AG04449 (cell line): ENCODE measurements at regions of chr14 and their contacts with region 1.

Region 1: GRCh38 chr14:23379366-23380196 is 2.7 kb downstream of the CMTM5 start:
- DNase-seq: no peak
- H3K4me3 ChIP-seq: no peak overlapping the region
- CTCF ChIP-seq: peak; percentile 98

Region 2: DNA sequence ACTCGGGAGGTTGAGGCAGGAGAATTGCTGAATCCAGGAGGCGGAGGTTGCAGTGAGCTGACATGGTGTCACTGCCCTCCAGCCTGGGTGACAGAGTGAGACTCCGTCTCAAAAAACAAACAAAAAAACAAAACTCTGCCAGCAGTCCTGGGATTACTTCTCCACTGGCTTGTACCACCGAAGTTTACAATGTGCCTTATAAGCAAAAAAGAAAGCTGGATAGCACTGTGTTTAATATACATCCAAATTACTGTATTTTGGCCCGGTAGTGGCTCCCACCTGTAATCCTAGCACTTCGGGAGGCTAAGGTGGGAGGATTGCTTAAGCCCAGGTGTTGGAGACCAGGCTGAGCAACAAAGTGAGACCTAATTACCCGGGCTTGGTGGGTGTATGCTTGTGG is 110.4 kb before region 1 on chr14:
- CTCF ChIA-PET with region 1: interaction called, 16 read pairs
- POLR2A ChIA-PET with region 1: no interaction called
- DNase-seq: no peak
- H3K4me3 ChIP-seq: no peak overlapping the region
- CTCF ChIP-seq: no peak

Region 3: GRCh38 chr14:23335623-23336022 is 44.0 kb before region 1 on chr14:
- CTCF ChIA-PET with region 1: interaction called, 303 read pairs
- POLR2A ChIA-PET with region 1: no interaction called
- DNase-seq: no peak
- H3K4me3 ChIP-seq: no peak overlapping the region
- CTCF ChIP-seq: no peak

Region 4: GRCh38 chr14:23352511-23353432 is 26.8 kb before region 1 on chr14 and contains the start of gene SLC22A17:
- CTCF ChIA-PET with region 1: interaction called, 33 read pairs
- POLR2A ChIA-PET with region 1: no interaction called
- DNase-seq: peak; percentile 59
- H3K4me3 ChIP-seq: peak within 1 kb of the TSS; percentile 87
- CTCF ChIP-seq: peak; percentile 10

Region 5: DNA sequence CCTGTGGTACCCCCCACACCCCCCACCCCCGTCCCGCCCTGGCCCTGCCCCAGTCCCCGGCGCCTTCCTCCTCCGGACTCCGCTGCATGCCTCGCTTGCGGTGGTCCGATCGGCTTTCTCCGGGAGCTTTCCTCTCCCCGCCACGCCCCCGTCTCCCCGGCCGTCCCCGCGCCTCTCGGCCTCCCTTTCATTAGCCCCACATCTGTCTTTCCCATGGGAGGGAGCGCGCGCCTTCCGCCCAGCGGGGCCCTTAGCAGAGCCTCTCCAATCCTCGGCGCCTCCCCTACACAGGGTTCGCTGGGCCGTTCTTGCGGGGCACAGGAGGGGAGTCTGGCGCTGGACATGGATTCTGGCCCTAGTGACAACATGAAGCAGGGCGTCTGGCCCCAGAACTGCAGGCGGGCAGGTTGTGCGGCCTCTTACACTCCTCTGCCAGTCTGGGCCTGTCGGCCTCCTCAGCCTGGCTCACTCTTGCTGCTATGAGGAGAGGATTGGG is 13.1 kb before region 1 on chr14:
- CTCF ChIA-PET with region 1: interaction called, 153 read pairs
- POLR2A ChIA-PET with region 1: interaction called, 3 read pairs
- DNase-seq: no peak
- H3K4me3 ChIP-seq: peak overlapping the region; percentile 74
- CTCF ChIP-seq: no peak

Region 6: GRCh38 chr14:23478111-23478759 is 98.7 kb after region 1 on chr14:
- CTCF ChIA-PET with region 1: no interaction called
- POLR2A ChIA-PET with region 1: no interaction called
- DNase-seq: peak; percentile 33
- H3K4me3 ChIP-seq: no peak overlapping the region
- CTCF ChIP-seq: peak; percentile 50

Region 7: GRCh38 chr14:23631702-23632460 is 252.3 kb after region 1 on chr14:
- CTCF ChIA-PET with region 1: no interaction called
- POLR2A ChIA-PET with region 1: no interaction called
- DNase-seq: peak; percentile 38
- H3K4me3 ChIP-seq: 0 out of 2 replicates have a peak overlapping the region, but pooled peaks have one; percentile 9
- CTCF ChIP-seq: peak; percentile 89